ENCODE measurements at regions of chr13 and their contacts with region 1.

Region 1: GRCh38 chr13:39527961-39528660 is 74.9 kb downstream of the LHFPL6 start:
- DNase-seq: peak; percentile 96
- ATAC-seq: peak; percentile 96
- H3K4me3 ChIP-seq: no peak overlapping the region
- H3K27ac ChIP-seq: peak overlapping the region; percentile 93
- H3K4me1 ChIP-seq: peaks cover 21% of the 10 kb centered on the region
- H3K27me3 ChIP-seq: no peaks in the 10 kb centered on the region
- CTCF ChIP-seq: no peak
- POLR2A ChIP-seq: no peak
- RAD21 ChIP-seq: no peak

Region 2: GRCh38 chr13:39462428-39462827 is 65.7 kb before region 1 on chr13:
- CTCF ChIA-PET with region 1: no interaction called
- POLR2A ChIA-PET with region 1: no interaction called
- dilution Hi-C with region 1: no loop called
- in situ Hi-C with region 1: no loop called
- intact Hi-C with region 1: loop called (anchors 5 kb)
- DNase-seq: no peak
- ATAC-seq: peak; percentile 55
- H3K4me3 ChIP-seq: no peak overlapping the region
- H3K27ac ChIP-seq: peak overlapping the region; percentile 72; the same call in 1 of the 2 replicates
- H3K4me1 ChIP-seq: peaks cover 8% of the 10 kb centered on the region
- H3K27me3 ChIP-seq: no peaks in the 10 kb centered on the region
- CTCF ChIP-seq: no peak
- POLR2A ChIP-seq: no peak
- RAD21 ChIP-seq: no peak

Region 3: DNA sequence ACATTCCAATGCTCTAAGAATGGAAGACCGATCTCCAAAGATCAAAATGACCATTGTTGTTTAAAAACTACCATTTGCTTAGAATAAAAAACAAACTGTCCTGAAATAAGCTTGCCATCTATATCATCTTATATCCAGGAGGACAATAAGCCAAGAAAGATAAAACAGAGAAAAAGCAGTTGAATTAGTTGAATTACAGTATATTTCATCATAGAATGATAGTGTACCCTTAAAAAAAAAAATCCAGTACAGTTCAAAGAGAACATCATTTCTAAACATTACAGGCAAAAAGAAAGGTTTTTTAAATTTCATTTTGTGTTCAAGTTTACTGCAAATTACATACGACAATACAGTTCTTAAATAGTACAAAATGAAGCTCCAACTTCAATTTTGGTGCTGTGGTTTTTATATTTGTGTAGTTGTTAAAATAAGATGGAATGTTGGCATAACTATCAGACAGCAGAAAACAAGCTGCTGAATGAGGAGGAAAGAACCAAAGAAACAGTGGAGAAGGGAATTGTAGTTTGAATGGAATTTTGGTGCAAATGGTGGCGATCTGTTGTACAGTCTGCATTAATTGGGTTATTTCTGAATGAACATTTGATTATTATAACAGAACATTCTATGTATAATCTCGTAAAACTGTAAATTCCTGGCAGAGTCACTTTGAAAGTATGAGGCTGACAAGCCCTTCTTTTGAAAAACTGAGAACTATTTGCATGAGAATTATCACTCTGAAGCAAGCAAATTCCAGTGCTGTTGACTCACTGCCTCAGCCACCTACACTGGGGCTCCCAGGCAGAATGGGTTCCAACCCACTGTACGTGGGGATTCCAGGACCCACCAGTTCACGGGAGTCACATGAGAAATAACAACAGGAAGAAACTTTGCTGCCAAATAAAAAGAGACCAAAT is 37.2 kb after region 1 on chr13:
- CTCF ChIA-PET with region 1: interaction called, 3 read pairs
- POLR2A ChIA-PET with region 1: no interaction called
- dilution Hi-C with region 1: no loop called
- in situ Hi-C with region 1: no loop called
- intact Hi-C with region 1: loop called (anchors 1 kb)
- DNase-seq: peak; percentile 95
- ATAC-seq: peak; percentile 90
- H3K4me3 ChIP-seq: peak overlapping the region; percentile 34; the same call in 1 of the 2 replicates
- H3K27ac ChIP-seq: peak overlapping the region; percentile 50; the same call in 1 of the 2 replicates
- H3K4me1 ChIP-seq: peaks cover 12% of the 10 kb centered on the region
- H3K27me3 ChIP-seq: no peaks in the 10 kb centered on the region
- CTCF ChIP-seq: no peak
- POLR2A ChIP-seq: no peak
- RAD21 ChIP-seq: no peak

Region 4: DNA sequence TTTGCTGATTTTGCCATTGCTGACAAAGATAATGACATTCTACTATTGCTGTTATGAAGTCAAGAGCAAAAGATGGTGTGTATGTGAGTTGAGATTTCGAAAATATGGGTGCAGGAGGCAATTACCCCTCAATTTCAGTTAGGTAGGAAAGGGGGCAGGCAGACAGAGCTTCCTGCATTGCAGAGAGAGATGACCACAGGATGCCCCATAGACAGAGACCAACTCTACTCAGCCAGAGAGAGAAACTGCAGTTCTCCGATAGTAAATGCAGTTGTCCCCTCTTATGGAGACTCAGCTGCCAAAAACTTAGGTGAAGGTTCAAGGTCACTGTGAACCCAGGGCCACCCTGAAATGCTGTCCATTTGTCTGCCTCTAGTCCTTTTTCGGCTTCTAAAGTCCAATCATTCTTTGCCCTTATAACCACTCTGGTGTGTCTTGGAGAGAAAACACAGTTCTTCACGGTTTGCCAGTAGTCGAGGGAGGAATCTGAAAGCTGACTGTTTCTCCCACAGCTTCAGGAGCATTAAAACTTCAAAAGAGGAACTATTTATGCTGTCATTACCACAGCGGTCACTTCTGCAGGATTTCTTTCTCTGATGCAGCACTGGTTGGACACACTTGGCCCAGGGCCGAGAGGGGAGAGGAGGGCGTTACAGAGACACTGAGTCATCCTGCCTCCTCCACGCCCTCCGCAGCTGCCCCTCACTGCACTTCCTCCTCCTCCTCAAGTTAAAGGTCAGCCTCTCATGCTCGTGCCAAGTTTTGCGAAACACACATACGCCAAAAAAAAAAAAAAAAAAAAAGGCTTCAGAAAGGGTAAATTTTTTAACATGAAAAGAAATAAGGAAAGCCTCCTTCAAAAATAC is 874.0 kb after region 1 on chr13:
- CTCF ChIA-PET with region 1: no interaction called
- POLR2A ChIA-PET with region 1: no interaction called
- dilution Hi-C with region 1: no loop called
- in situ Hi-C with region 1: no loop called
- intact Hi-C with region 1: no loop called
- DNase-seq: peak; percentile 92
- ATAC-seq: peak; percentile 95
- H3K4me3 ChIP-seq: no peak overlapping the region
- H3K27ac ChIP-seq: no peak overlapping the region; the same call in 1 of the 2 replicates
- H3K4me1 ChIP-seq: peaks cover 15% of the 10 kb centered on the region
- H3K27me3 ChIP-seq: no peaks in the 10 kb centered on the region
- CTCF ChIP-seq: no peak
- POLR2A ChIP-seq: no peak
- RAD21 ChIP-seq: no peak

Measured in IMR-90 (cell line).